Panc1 (cell line): ENCODE measurements at regions of chr3 and their contacts with region 1.

Region 1: GRCh38 chr3:143464850-143465249 is 345.3 kb downstream of the CHST2 start:
- DNase-seq: no peak
- ATAC-seq: no peak
- H3K4me3 ChIP-seq: no peak overlapping the region
- H3K27ac ChIP-seq: no peak overlapping the region
- H3K4me1 ChIP-seq: no peaks in the 10 kb centered on the region
- H3K27me3 ChIP-seq: no peaks in the 10 kb centered on the region
- CTCF ChIP-seq: no peak

Region 2: GRCh38 chr3:143182866-143183664 is 281.8 kb before region 1 on chr3:
- CTCF ChIA-PET with region 1: no interaction called
- POLR2A ChIA-PET with region 1: interaction called, 14 read pairs
- in situ Hi-C with region 1: no loop called
- intact Hi-C with region 1: no loop called
- DNase-seq: no peak
- ATAC-seq: no peak
- H3K4me3 ChIP-seq: no peak overlapping the region
- H3K27ac ChIP-seq: no peak overlapping the region
- H3K4me1 ChIP-seq: no peaks in the 10 kb centered on the region
- H3K27me3 ChIP-seq: no peaks in the 10 kb centered on the region
- CTCF ChIP-seq: no peak